CD14-positive monocyte (primary cell): ENCODE measurements at regions of chr6 and their contacts with region 1.

Region 1: DNA sequence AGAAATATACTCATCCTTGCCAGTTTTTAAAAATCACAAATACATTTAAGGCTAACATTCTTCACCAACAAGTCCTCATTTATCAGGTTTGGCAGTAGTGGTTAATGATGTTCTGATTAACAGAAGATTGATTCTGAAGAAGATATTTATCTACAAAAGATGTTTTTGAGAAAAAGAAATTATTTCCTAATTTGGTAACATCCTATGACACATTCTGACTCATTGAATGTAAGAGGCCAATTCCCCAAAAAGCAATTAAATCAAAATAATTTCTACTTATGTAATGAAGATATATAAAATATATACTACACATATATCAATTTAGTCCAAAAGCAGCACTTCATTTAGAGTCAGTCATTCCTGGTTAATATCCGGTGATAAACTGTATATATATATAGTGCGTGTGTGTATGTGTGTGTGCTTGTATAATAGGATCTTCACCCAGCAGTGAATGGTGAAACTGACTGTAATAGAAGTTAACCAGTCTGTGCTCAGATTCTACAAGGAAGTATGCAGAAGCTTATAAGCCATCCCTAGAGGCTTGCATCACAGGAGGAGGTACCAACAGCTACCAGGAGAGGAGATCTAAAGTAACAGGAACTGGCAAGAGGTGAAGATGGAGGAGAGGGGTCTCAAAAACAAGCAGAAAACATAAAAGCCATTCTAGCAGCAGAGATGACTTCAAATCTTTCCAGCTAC is 82.9 kb upstream of the MARCKS start:
- DNase-seq: peak; percentile 50 to 75 (median 60)
- H3K4me3 ChIP-seq: no peak overlapping the region
- H3K4me3 Mint-ChIP-seq: no peak overlapping the region
- H3K27ac ChIP-seq: peak overlapping the region; percentile 32 to 66
- H3K27ac Mint-ChIP-seq: peak overlapping the region; percentile 4 to 87 (median 52)
- H3K4me1 ChIP-seq: peaks cover 4 to 13% of the 10 kb centered on the region in 2 donors
- H3K4me1 Mint-ChIP-seq: peaks cover 11% of the 10 kb centered on the region
- H3K27me3 ChIP-seq: no peaks in the 10 kb centered on the region
- H3K27me3 Mint-ChIP-seq: no peaks in the 10 kb centered on the region
- CTCF ChIP-seq: no peak

Region 2: DNA sequence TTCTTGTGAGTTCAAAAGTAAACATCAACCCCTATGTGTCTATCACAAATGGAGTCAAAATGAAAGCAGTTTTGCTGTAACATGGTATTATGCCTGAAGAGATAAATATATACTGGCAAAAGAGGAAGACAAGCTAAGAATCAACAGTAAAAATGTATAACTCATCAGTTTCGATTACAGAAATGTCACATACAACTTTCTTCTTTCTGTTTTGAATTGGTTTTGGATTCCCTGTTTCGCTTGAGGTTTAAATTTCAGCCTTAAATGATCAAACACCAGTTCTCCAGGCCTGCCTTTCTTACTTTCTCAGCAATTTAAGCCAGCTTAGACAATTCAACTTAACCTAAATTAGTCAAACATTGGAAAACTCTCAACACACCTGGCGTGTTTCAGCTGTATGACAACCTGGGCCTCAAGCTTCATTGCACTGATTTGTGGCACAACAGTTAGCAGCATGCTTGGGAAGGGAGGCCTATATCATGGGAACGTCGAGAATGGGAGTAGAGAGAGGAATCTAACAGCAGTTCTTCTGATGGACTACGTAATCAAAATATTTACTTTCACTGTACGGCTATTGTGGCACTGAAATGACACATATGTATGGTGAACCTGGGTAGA is 31.0 kb after region 1 on chr6:
- intact Hi-C with region 1: loop called in 1 of 2 experiments (anchors 5 kb)
- DNase-seq: peak; percentile 38 to 65 (median 58)
- H3K4me3 ChIP-seq: peak overlapping the region; percentile 8 to 61 (median 32)
- H3K4me3 Mint-ChIP-seq: peak overlapping the region; percentile 47 to 71
- H3K27ac ChIP-seq: peak overlapping the region; percentile 72 to 91
- H3K27ac Mint-ChIP-seq: peak overlapping the region; percentile 89 to 97 (median 93)
- H3K4me1 ChIP-seq: peaks cover 62 to 78% of the 10 kb centered on the region in 2 donors
- H3K4me1 Mint-ChIP-seq: peaks cover 66% of the 10 kb centered on the region
- H3K27me3 ChIP-seq: no peaks in the 10 kb centered on the region
- H3K27me3 Mint-ChIP-seq: peaks cover 0 to 2% (median 0%) of the 10 kb centered on the region in 3 donors
- CTCF ChIP-seq: no peak